PC-3 (cell line): ENCODE measurements at regions of chr3 and their contacts with region 1.

Region 1: GRCh38 chr3:5026331-5027218 is 47.3 kb downstream of the BHLHE40 start:
- DNase-seq: peak; percentile 95
- ATAC-seq: peak; percentile 68
- H3K4me3 ChIP-seq: peak overlapping the region; percentile 64
- H3K27ac ChIP-seq: peak overlapping the region; percentile 96
- H3K4me1 ChIP-seq: peaks cover 43% of the 10 kb centered on the region
- H3K27me3 ChIP-seq: no peaks in the 10 kb centered on the region
- CTCF ChIP-seq: peak; percentile 76

Region 2: DNA sequence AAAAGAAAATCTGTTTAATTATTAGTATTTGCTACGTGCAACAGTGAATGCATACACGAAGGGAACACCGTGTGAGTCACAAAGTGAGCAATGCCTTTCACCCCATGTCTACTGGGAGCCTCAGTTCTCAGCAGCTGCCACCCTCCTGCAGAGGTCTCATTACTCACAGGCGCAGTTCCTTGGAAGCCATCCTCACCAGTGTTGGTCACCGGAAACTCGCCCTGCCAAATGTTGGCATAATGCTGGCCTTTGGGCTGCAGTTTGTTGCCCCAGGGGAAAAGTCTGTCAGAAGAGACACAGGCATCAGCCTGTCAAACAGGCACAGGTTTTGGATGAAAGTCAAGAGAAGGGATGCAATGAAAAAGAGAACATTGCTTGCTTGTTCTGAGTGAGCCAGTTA is 609.6 kb before region 1 on chr3:
- CTCF ChIA-PET with region 1: no interaction called
- POLR2A ChIA-PET with region 1: no interaction called
- intact Hi-C with region 1: loop called (anchors 10 kb)
- DNase-seq: peak; percentile 100
- ATAC-seq: peak; percentile 86
- H3K4me3 ChIP-seq: peak overlapping the region; percentile 43; the same call in 1 of the 2 replicates
- H3K27ac ChIP-seq: peak overlapping the region; percentile 99
- H3K4me1 ChIP-seq: peaks cover 72% of the 10 kb centered on the region
- H3K27me3 ChIP-seq: no peaks in the 10 kb centered on the region
- CTCF ChIP-seq: no peak

Region 3: DNA sequence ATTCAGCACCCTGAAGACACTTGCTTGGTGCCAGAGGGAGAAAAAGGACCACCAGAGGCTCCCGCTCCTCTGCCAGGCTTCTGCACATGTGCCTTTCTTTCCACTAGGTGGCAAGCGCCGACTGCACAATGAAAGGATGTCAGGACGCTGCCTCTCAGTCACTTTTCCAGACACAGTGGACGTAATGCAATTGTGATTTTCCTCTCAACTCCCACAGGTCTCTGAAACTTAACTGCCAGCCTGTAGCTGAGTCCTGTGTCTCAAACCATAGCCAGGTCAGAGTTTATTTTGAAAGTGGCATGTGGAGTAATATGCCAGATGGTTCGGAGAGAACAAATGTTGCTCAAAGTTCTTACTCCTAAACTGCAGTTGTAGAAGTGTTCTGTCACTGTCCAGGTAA is 370.5 kb before region 1 on chr3:
- CTCF ChIA-PET with region 1: interaction called, 3 read pairs
- POLR2A ChIA-PET with region 1: no interaction called
- intact Hi-C with region 1: loop called (anchors 10 kb)
- DNase-seq: peak; percentile 83
- ATAC-seq: peak; percentile 98
- H3K4me3 ChIP-seq: no peak overlapping the region
- H3K27ac ChIP-seq: no peak overlapping the region
- H3K4me1 ChIP-seq: peaks cover 4% of the 10 kb centered on the region
- H3K27me3 ChIP-seq: no peaks in the 10 kb centered on the region
- CTCF ChIP-seq: peak; percentile 98

Region 4: DNA sequence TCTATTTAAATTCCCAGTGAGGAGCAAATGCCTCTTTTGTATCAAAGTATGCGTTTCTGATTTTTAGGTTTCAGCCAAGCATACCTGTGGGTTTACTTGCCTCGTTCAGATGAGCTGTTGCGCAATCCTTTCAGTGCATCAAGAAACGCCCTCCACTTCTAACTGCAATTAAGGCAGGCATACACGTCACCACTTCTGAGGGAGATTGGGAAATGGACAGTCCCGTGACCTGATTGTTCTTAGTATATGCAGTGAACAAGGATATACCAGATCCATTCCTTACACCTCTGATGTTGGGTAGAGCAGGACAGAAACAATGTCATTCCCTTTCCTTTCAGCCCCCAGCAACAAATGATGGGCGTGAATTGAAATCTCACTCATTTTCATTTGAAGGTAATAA is 314.4 kb before region 1 on chr3:
- CTCF ChIA-PET with region 1: interaction called, 21 read pairs
- POLR2A ChIA-PET with region 1: no interaction called
- intact Hi-C with region 1: loop called (anchors 1 kb)
- DNase-seq: peak; percentile 55
- ATAC-seq: no peak
- H3K4me3 ChIP-seq: no peak overlapping the region
- H3K27ac ChIP-seq: peak overlapping the region; percentile 18; the same call in 1 of the 2 replicates
- H3K4me1 ChIP-seq: peaks cover 28% of the 10 kb centered on the region
- H3K27me3 ChIP-seq: no peaks in the 10 kb centered on the region
- CTCF ChIP-seq: no peak

Region 5: GRCh38 chr3:4741404-4742307 is 284.9 kb before region 1 on chr3:
- CTCF ChIA-PET with region 1: no interaction called
- POLR2A ChIA-PET with region 1: interaction called, 4 read pairs
- intact Hi-C with region 1: loop called (anchors 1 kb)
- DNase-seq: peak; percentile 98
- ATAC-seq: peak; percentile 64
- H3K4me3 ChIP-seq: no peak overlapping the region
- H3K27ac ChIP-seq: peak overlapping the region; percentile 97
- H3K4me1 ChIP-seq: peaks cover 53% of the 10 kb centered on the region
- H3K27me3 ChIP-seq: no peaks in the 10 kb centered on the region
- CTCF ChIP-seq: no peak

Region 6: GRCh38 chr3:4986782-4987537 is 39.6 kb before region 1 on chr3:
- CTCF ChIA-PET with region 1: interaction called, 11 read pairs
- POLR2A ChIA-PET with region 1: interaction called, 79 read pairs
- intact Hi-C with region 1: loop called (anchors 1 kb)
- DNase-seq: peak; percentile 98
- ATAC-seq: peak; percentile 69
- H3K4me3 ChIP-seq: peak overlapping the region; percentile 35; the same call in 1 of the 2 replicates
- H3K27ac ChIP-seq: peak overlapping the region; percentile 90
- H3K4me1 ChIP-seq: peaks cover 63% of the 10 kb centered on the region
- H3K27me3 ChIP-seq: no peaks in the 10 kb centered on the region
- CTCF ChIP-seq: 0 out of 2 replicates have a peak, but pooled peaks have one; percentile 25